Naive thymus-derived CD4-positive, alpha-beta T cell (primary cell): ENCODE measurements at regions of chr9 and their contacts with region 1.

Region 1: GRCh38 chr9:71819115-71819739 is 50.9 kb upstream of the CEMIP2 start:
- DNase-seq: peak in 7 of 9 donors; percentile 26 to 61 (median 55)
- ATAC-seq: no peak
- H3K4me3 ChIP-seq: no peak overlapping the region
- H3K4me3 Mint-ChIP-seq: no peak overlapping the region
- H3K27ac ChIP-seq: no peak overlapping the region
- H3K27ac Mint-ChIP-seq: peak overlapping the region in 3 of 9 donors; percentile 12 to 60 (median 51)
- H3K4me1 ChIP-seq: peaks cover 7 to 8% of the 10 kb centered on the region in 2 donors
- H3K4me1 Mint-ChIP-seq: peaks cover 11 to 35% (median 26%) of the 10 kb centered on the region in 7 donors
- H3K27me3 ChIP-seq: no peaks in the 10 kb centered on the region
- H3K27me3 Mint-ChIP-seq: no peaks in the 10 kb centered on the region

Region 2: DNA sequence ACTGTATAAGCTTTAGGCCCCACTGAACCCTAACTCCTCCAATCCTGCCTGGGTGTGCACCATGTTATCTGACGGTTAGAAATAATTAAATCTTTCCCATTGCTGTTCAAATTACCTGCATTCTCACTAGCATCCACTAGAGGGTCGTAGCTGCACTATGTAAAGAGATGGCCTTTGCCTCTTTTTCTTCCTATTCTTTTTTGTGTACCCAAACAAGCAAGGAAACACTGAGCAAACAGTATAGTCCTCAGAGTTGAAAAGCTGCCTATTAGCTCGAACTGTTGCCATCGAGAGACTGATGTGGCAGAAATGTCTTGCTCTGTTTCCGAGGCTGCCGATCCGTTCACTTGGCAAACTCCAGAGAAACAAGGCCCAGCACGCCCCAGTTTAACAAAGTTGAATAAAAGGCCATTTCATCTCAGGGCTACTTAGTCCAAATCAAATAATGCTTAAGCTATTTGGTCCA is 534.0 kb before region 1 on chr9:
- CTCF ChIA-PET with region 1: interaction called, 5 read pairs
- POLR2A ChIA-PET with region 1: interaction called, 4 read pairs
- intact Hi-C with region 1: loop called in 1 of 2 experiments (anchors 2 kb)
- DNase-seq: peak in 6 of 9 donors; percentile 10 to 42 (median 36)
- ATAC-seq: peak; percentile 79
- H3K4me3 ChIP-seq: no peak overlapping the region
- H3K4me3 Mint-ChIP-seq: no peak overlapping the region
- H3K27ac ChIP-seq: no peak overlapping the region
- H3K27ac Mint-ChIP-seq: no peak overlapping the region
- H3K4me1 ChIP-seq: no peaks in the 10 kb centered on the region
- H3K4me1 Mint-ChIP-seq: peaks cover 0 to 3% (median 0%) of the 10 kb centered on the region in 7 donors
- H3K27me3 ChIP-seq: no peaks in the 10 kb centered on the region
- H3K27me3 Mint-ChIP-seq: peaks cover 2 to 9% (median 6%) of the 10 kb centered on the region in 5 donors

Region 3: DNA sequence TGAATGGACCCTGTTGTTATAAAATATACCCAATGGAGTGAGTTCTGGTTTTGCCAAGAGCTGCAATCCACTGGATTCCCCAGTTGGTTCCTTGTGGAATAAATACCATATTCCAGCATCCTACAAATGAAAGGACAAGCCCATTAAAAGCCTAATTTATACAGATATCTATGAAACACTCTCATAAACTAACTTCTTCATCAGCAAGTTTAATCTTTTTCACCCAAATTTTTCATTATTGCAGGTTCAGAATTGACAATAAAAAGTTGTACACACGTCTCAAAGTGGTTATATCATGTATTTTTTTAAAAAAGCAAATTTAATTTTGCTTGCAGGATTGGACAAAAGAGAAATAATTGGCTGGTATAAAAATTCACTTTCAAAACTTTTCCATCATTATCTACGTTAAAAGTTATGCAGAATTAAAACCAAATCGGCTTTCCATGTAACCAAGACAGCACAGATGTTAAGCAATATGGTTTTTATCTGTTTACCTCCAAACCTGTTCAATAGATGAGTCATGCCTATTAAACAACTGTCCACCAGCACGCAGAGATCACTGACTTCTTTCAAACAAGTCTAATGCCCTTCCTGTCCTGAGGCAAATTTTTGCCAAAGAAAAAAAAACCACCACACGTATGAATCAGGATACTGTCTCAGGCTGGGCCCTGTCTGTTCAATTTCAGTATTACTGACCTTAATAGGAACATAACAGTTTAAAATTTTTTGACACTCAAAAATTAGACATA is 93.5 kb before region 1 on chr9:
- CTCF ChIA-PET with region 1: no interaction called
- POLR2A ChIA-PET with region 1: no interaction called
- intact Hi-C with region 1: loop called in 1 of 2 experiments (anchors 5 kb)
- DNase-seq: no peak
- ATAC-seq: no peak
- H3K4me3 ChIP-seq: no peak overlapping the region
- H3K4me3 Mint-ChIP-seq: no peak overlapping the region
- H3K27ac ChIP-seq: no peak overlapping the region
- H3K27ac Mint-ChIP-seq: peak overlapping the region in 1 of 9 donors; percentile 18
- H3K4me1 ChIP-seq: no peaks in the 10 kb centered on the region
- H3K4me1 Mint-ChIP-seq: peaks cover 0 to 15% (median 11%) of the 10 kb centered on the region in 7 donors
- H3K27me3 ChIP-seq: no peaks in the 10 kb centered on the region
- H3K27me3 Mint-ChIP-seq: no peaks in the 10 kb centered on the region

Region 4: DNA sequence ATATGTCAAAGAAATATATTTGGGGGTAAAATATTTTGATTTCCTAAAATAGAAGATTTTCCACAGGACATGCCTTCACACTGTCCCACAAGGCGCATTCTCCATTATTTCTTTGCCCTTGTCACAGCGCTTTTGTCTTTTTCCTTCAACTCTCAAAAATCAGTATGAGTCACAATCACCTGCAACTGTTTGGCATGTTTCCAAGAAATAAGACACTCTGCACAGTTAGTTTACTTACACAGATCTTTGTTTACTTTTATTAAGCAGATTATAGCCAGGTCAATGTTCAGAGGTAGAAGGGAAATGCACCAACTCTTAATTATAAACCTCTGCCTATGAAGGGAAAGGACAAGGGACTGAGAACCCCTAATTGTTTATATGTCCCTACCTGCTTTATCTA is 60.4 kb before region 1 on chr9:
- CTCF ChIA-PET with region 1: interaction called, 5 read pairs
- POLR2A ChIA-PET with region 1: interaction called, 4 read pairs
- intact Hi-C with region 1: loop called in 1 of 2 experiments (anchors 1 kb)
- DNase-seq: no peak
- ATAC-seq: no peak
- H3K4me3 ChIP-seq: no peak overlapping the region
- H3K4me3 Mint-ChIP-seq: peak overlapping the region in 7 of 10 donors; percentile 3 to 57 (median 25)
- H3K27ac ChIP-seq: no peak overlapping the region
- H3K27ac Mint-ChIP-seq: peak overlapping the region in 3 of 9 donors; percentile 28 to 79 (median 71)
- H3K4me1 ChIP-seq: peaks cover 28 to 45% of the 10 kb centered on the region in 2 donors
- H3K4me1 Mint-ChIP-seq: peaks cover 60 to 98% (median 95%) of the 10 kb centered on the region in 7 donors
- H3K27me3 ChIP-seq: no peaks in the 10 kb centered on the region
- H3K27me3 Mint-ChIP-seq: no peaks in the 10 kb centered on the region

Region 5: DNA sequence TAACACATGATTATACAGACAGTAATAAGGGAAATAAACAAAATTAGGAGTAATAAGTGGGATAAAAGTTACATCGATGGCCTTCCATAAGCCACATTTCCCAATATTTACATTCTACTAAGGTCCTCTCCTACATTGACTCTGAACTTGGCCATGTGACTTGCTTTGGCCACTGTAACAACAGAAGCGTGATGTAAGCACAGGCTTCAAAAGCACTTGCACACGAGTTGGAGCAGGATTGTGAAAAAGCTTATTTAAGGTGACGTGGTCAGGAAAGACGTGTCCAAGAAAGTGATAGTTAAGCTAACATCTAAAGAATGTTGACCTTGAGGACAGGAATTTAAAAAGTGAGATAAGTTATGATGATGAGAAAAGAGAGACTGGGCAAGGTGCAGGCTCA is 41.1 kb before region 1 on chr9:
- CTCF ChIA-PET with region 1: interaction called, 111 read pairs
- POLR2A ChIA-PET with region 1: interaction called, 19 read pairs
- intact Hi-C with region 1: loop called (anchors 1 kb)
- DNase-seq: no peak
- ATAC-seq: no peak
- H3K4me3 ChIP-seq: no peak overlapping the region
- H3K4me3 Mint-ChIP-seq: no peak overlapping the region
- H3K27ac ChIP-seq: no peak overlapping the region
- H3K27ac Mint-ChIP-seq: peak overlapping the region in 4 of 9 donors; percentile 1 to 84 (median 58)
- H3K4me1 ChIP-seq: peaks cover 25 to 27% of the 10 kb centered on the region in 2 donors
- H3K4me1 Mint-ChIP-seq: peaks cover 13 to 48% (median 41%) of the 10 kb centered on the region in 7 donors
- H3K27me3 ChIP-seq: no peaks in the 10 kb centered on the region
- H3K27me3 Mint-ChIP-seq: no peaks in the 10 kb centered on the region

Region 6: GRCh38 chr9:71795097-71795813 is 24.0 kb before region 1 on chr9:
- CTCF ChIA-PET with region 1: interaction called, 40 read pairs
- POLR2A ChIA-PET with region 1: interaction called, 11 read pairs
- intact Hi-C with region 1: loop called in 1 of 2 experiments (anchors 2 kb)
- DNase-seq: peak in 7 of 9 donors; percentile 68 to 90 (median 85)
- ATAC-seq: peak; percentile 92
- H3K4me3 ChIP-seq: peak overlapping the region; percentile 17
- H3K4me3 Mint-ChIP-seq: peak overlapping the region; percentile 26 to 90 (median 76)
- H3K27ac ChIP-seq: peak overlapping the region; percentile 71
- H3K27ac Mint-ChIP-seq: peak overlapping the region; percentile 91 to 99 (median 96)
- H3K4me1 ChIP-seq: peaks cover 36 to 63% of the 10 kb centered on the region in 2 donors
- H3K4me1 Mint-ChIP-seq: peaks cover 44 to 87% (median 76%) of the 10 kb centered on the region in 7 donors
- H3K27me3 ChIP-seq: no peaks in the 10 kb centered on the region
- H3K27me3 Mint-ChIP-seq: no peaks in the 10 kb centered on the region

Region 7: GRCh38 chr9:71806901-71807307 is 12.3 kb before region 1 on chr9:
- CTCF ChIA-PET with region 1: interaction called, 75 read pairs
- POLR2A ChIA-PET with region 1: interaction called, 5 read pairs
- intact Hi-C with region 1: loop called (anchors 1 kb)
- DNase-seq: peak in 8 of 9 donors; percentile 20 to 65 (median 50)
- ATAC-seq: peak; percentile 98
- H3K4me3 ChIP-seq: no peak overlapping the region
- H3K4me3 Mint-ChIP-seq: no peak overlapping the region
- H3K27ac ChIP-seq: no peak overlapping the region
- H3K27ac Mint-ChIP-seq: peak overlapping the region in 7 of 9 donors; percentile 19 to 85 (median 65)
- H3K4me1 ChIP-seq: peaks cover 0 to 7% of the 10 kb centered on the region in 2 donors
- H3K4me1 Mint-ChIP-seq: peaks cover 0 to 21% (median 10%) of the 10 kb centered on the region in 7 donors
- H3K27me3 ChIP-seq: no peaks in the 10 kb centered on the region
- H3K27me3 Mint-ChIP-seq: peaks cover 0 to 3% (median 0%) of the 10 kb centered on the region in 5 donors